ENCODE measurements at regions of chr2 and their contacts with region 1.

Region 1: DNA sequence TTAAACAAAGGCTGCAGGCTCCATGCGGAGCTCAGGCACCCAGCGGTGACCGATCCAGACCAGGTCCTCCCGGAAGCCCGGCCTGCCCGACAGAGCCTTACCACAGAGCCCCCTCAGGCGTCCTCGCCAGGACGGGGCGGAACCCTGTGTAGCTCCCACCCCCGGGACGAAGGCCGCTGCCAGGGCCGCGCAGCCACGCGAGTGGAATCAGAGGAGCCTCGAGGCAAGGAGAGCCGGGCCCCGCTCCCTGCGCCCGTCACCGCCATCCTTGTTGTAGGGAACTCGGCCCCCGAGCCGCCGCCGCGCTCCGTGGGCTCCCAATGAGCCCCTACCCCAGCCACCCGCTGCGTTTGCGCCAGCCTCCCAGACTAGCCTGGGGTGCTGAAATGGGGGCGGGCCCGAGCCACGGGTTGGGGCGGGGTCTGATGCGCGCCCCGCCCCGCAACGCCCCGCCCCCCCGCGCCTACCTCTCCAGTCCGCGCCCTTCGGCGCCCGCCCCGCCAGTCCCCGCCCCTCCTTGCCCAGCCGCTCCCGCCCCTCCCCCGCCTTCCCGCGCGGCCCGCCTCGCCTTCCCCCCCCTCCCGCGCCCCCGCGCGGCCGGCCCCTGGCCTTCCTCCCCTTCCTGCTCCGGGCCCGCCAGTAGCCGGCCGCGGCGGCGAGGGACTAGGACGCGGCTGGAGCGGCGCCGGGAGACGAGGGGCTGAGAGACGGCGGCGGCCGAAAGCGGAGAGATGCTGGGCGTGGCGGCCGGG is at the start of gene LIMS1:
- DNase-seq: peak; percentile 91
- ATAC-seq: peak; percentile 92
- H3K4me3 ChIP-seq: peak within 1 kb of the TSS; percentile 72 to 95 (median 85)
- H3K4me3 Mint-ChIP-seq: peak within 1 kb of the TSS; percentile 98
- H3K27ac ChIP-seq: peak within 1 kb of the TSS; percentile 65 to 69
- H3K27ac Mint-ChIP-seq: peak within 1 kb of the TSS; percentile 94
- H3K4me1 ChIP-seq: peaks cover 8 to 19% of the 10 kb centered on the region in 2 donors
- H3K4me1 Mint-ChIP-seq: peaks cover 30% of the 10 kb centered on the region
- H3K27me3 ChIP-seq: no peaks in the 10 kb centered on the region
- H3K27me3 Mint-ChIP-seq: no peaks in the 10 kb centered on the region
- CTCF ChIP-seq: no peak
- total RNA-seq, gene LIMS1: 22.1 and 26.2 TPM in 2 replicates

Region 2: GRCh38 chr2:108423502-108424252 is 110.3 kb before region 1 on chr2:
- CTCF ChIA-PET with region 1: no interaction called
- POLR2A ChIA-PET with region 1: no interaction called
- intact Hi-C with region 1: no loop called
- DNase-seq: no peak
- ATAC-seq: no peak
- H3K4me3 ChIP-seq: no peak overlapping the region
- H3K4me3 Mint-ChIP-seq: no peak overlapping the region
- H3K27ac ChIP-seq: no peak overlapping the region
- H3K27ac Mint-ChIP-seq: no peak overlapping the region
- H3K4me1 ChIP-seq: no peaks in the 10 kb centered on the region
- H3K4me1 Mint-ChIP-seq: no peaks in the 10 kb centered on the region
- H3K27me3 ChIP-seq: peaks cover 0 to 10% (median 0%) of the 10 kb centered on the region in 4 experiments
- H3K27me3 Mint-ChIP-seq: peaks cover 21% of the 10 kb centered on the region
- CTCF ChIP-seq: no peak

Region 3: GRCh38 chr2:108448678-108449493 is 85.1 kb before region 1 on chr2 and contains the start of gene GCC2:
- CTCF ChIA-PET with region 1: interaction called, 5 read pairs
- POLR2A ChIA-PET with region 1: interaction called, 4 read pairs
- intact Hi-C with region 1: loop called (anchors 1 kb)
- DNase-seq: peak; percentile 98
- ATAC-seq: peak; percentile 96
- H3K4me3 ChIP-seq: peak within 1 kb of the TSS; percentile 87 to 99 (median 95)
- H3K4me3 Mint-ChIP-seq: peak within 1 kb of the TSS; percentile 100
- H3K27ac ChIP-seq: peak within 1 kb of the TSS; percentile 94 to 98
- H3K27ac Mint-ChIP-seq: peak within 1 kb of the TSS; percentile 98
- H3K4me1 ChIP-seq: peaks cover 19 to 20% of the 10 kb centered on the region in 2 donors
- H3K4me1 Mint-ChIP-seq: peaks cover 43% of the 10 kb centered on the region
- H3K27me3 ChIP-seq: no peaks in the 10 kb centered on the region
- H3K27me3 Mint-ChIP-seq: no peaks in the 10 kb centered on the region
- CTCF ChIP-seq: no peak
- total RNA-seq, gene GCC2: 87.9 and 97.3 TPM in 2 replicates

Region 4: GRCh38 chr2:108553209-108553919 is 19.4 kb after region 1 on chr2:
- CTCF ChIA-PET with region 1: no interaction called
- POLR2A ChIA-PET with region 1: no interaction called
- intact Hi-C with region 1: no loop called
- DNase-seq: no peak
- ATAC-seq: no peak
- H3K4me3 ChIP-seq: no peak overlapping the region
- H3K4me3 Mint-ChIP-seq: no peak overlapping the region
- H3K27ac ChIP-seq: no peak overlapping the region
- H3K27ac Mint-ChIP-seq: no peak overlapping the region
- H3K4me1 ChIP-seq: no peaks in the 10 kb centered on the region
- H3K4me1 Mint-ChIP-seq: peaks cover 7% of the 10 kb centered on the region
- H3K27me3 ChIP-seq: no peaks in the 10 kb centered on the region
- H3K27me3 Mint-ChIP-seq: no peaks in the 10 kb centered on the region
- CTCF ChIP-seq: no peak

Region 5: DNA sequence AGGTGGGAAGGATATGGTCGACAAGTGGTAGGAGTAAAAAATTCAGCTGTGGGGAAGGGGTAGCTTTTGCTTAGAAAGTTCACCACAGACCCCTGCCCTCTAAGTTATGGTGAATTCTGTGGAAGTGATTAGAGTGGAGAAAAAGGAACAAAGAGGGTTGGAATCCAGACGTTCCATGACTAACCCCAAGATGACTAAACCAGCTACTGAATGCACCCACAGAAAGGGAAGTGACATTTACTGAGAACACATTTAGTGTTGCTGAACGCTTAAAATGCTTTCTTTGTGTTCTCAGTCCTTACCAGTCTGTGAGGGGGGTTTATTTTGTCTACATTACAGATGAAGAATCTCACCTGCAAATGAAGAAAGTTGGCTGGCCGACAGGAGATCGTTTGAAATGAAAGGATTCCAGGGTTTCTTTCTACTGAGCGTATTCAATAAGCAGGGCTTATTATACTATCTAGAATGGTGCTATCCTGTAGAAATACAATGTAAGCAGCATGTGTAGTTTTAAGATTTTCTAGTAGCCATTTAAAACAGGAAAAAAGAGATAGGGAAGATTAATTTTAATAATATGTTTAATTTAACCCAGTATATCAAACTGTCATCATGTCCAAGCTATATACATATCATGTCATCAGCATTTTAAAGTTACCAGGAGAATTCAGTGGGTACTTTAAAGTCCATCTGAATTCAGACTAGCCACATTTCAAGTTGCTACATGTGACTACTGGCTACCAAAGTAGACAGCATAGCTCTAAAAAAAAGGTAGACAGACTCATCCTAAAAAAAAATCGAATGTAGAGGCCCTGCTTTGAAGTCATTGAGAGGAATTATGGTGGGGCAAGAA is 60.3 kb after region 1 on chr2:
- CTCF ChIA-PET with region 1: no interaction called
- POLR2A ChIA-PET with region 1: no interaction called
- intact Hi-C with region 1: loop called (anchors 5 kb)
- DNase-seq: peak; percentile 62
- ATAC-seq: peak; percentile 69
- H3K4me3 ChIP-seq: no peak overlapping the region
- H3K4me3 Mint-ChIP-seq: peak overlapping the region; percentile 62
- H3K27ac ChIP-seq: peak overlapping the region in 1 of 2 donors; percentile 24
- H3K27ac Mint-ChIP-seq: peak overlapping the region; percentile 77
- H3K4me1 ChIP-seq: peaks cover 49 to 50% of the 10 kb centered on the region in 2 donors
- H3K4me1 Mint-ChIP-seq: peaks cover 69% of the 10 kb centered on the region
- H3K27me3 ChIP-seq: no peaks in the 10 kb centered on the region
- H3K27me3 Mint-ChIP-seq: no peaks in the 10 kb centered on the region
- CTCF ChIP-seq: no peak

Region 6: DNA sequence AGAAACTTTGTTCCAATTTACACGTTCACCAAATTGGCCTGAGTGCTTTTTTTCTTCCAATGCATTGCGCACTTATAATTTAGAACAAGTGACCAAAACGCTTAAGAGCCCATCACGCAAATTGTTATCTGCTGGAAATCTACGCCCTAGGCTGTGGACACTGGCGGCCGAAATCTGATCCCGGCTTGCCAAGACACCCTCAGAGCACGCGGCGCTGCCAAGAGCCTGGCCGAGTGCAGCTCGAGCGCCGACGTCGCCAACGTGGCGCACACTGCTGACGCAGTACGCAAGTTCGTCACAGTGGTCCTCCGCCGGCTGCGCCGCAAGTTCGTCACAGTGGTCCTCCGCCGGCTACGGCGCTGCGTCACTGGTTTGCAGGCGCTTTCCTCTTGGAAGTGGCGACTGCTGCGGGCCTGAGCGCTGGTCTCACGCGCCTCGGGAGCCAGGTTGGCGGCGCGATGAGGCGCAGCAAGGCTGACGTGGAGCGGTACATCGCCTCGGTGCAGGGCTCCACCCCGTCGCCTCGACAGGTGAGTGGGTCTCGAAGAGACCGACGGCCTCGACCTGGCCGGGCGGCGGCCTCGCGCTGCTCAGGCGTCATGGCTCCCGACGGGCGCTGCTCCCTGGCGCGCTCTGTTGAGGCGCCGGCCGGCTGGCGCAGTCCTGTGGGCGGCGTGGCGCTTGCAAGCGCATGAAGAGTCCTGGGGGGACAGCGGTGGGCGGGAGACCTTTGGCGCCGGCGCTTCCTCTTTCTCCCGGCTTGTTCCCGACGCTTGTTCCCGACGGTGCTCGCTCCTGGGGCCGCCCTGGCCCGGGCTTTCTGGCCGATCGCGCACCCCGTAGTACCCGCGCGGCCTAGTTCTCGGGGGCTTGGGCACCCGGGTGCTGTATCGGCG is 185.4 kb after region 1 on chr2 and contains the start of gene RANBP2:
- CTCF ChIA-PET with region 1: no interaction called
- POLR2A ChIA-PET with region 1: no interaction called
- intact Hi-C with region 1: loop called (anchors 5 kb)
- DNase-seq: peak; percentile 97
- ATAC-seq: peak; percentile 97
- H3K4me3 ChIP-seq: peak within 1 kb of the TSS; percentile 65 to 94 (median 85)
- H3K4me3 Mint-ChIP-seq: peak within 1 kb of the TSS; percentile 98
- H3K27ac ChIP-seq: peak within 1 kb of the TSS; percentile 83 to 89
- H3K27ac Mint-ChIP-seq: peak within 1 kb of the TSS; percentile 98
- H3K4me1 ChIP-seq: peaks cover 7 to 18% of the 10 kb centered on the region in 2 donors
- H3K4me1 Mint-ChIP-seq: peaks cover 22% of the 10 kb centered on the region
- H3K27me3 ChIP-seq: no peaks in the 10 kb centered on the region
- H3K27me3 Mint-ChIP-seq: no peaks in the 10 kb centered on the region
- CTCF ChIP-seq: no peak
- total RNA-seq, gene RANBP2: 67.0 and 69.5 TPM in 2 replicates

Region 7: DNA sequence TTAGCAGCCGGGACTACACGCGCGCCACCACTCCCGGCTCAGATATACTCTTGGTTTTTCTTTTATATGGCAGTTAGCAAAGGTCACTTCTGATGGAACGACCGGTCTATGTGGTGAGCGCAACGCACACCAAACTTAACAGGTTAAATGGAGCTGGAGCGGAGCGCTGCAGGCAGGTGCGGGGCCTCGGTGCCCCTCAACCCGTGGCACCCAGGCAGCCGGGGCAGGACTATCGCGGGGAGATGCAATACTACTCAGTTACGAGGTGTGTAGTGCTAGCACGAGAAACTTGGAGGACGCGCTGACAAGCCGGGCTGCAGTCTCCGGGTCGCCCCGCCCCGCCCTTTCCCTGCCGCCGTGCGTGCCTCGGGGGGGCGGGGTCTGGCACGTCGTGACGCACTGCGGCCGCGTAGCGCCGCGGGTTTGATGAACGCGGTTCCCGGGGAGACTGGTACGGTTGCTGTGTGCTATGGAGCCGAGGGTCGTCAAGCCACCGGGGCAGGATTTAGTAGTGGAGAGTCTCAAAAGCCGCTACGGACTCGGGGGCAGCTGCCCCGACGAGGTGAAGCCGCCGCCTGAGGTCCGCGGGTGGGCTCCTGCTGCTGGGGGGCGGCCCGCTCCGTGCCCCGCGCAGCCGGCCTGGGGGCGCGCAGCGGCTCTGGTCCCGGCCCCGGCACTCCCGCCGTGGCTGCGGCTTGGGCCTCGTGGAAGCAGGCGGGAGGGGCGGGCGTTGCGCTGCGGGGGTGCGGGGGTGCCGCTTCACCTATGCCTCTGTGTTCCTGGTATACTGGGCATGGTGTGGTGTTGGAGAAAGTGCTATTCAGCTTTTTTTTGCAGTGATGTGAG is 252.6 kb after region 1 on chr2 and contains the start of gene CCDC138:
- CTCF ChIA-PET with region 1: no interaction called
- POLR2A ChIA-PET with region 1: no interaction called
- intact Hi-C with region 1: loop called (anchors 1 kb)
- DNase-seq: peak; percentile 92
- ATAC-seq: peak; percentile 97
- H3K4me3 ChIP-seq: peak within 1 kb of the TSS; percentile 61 to 88 (median 70)
- H3K4me3 Mint-ChIP-seq: peak within 1 kb of the TSS; percentile 99
- H3K27ac ChIP-seq: peak within 1 kb of the TSS; percentile 69 to 86
- H3K27ac Mint-ChIP-seq: peak within 1 kb of the TSS; percentile 91
- H3K4me1 ChIP-seq: peaks cover 6 to 7% of the 10 kb centered on the region in 2 donors
- H3K4me1 Mint-ChIP-seq: peaks cover 12% of the 10 kb centered on the region
- H3K27me3 ChIP-seq: no peaks in the 10 kb centered on the region
- H3K27me3 Mint-ChIP-seq: no peaks in the 10 kb centered on the region
- CTCF ChIP-seq: no peak
- total RNA-seq, gene CCDC138: 11.4 and 16.3 TPM in 2 replicates

Region 8: DNA sequence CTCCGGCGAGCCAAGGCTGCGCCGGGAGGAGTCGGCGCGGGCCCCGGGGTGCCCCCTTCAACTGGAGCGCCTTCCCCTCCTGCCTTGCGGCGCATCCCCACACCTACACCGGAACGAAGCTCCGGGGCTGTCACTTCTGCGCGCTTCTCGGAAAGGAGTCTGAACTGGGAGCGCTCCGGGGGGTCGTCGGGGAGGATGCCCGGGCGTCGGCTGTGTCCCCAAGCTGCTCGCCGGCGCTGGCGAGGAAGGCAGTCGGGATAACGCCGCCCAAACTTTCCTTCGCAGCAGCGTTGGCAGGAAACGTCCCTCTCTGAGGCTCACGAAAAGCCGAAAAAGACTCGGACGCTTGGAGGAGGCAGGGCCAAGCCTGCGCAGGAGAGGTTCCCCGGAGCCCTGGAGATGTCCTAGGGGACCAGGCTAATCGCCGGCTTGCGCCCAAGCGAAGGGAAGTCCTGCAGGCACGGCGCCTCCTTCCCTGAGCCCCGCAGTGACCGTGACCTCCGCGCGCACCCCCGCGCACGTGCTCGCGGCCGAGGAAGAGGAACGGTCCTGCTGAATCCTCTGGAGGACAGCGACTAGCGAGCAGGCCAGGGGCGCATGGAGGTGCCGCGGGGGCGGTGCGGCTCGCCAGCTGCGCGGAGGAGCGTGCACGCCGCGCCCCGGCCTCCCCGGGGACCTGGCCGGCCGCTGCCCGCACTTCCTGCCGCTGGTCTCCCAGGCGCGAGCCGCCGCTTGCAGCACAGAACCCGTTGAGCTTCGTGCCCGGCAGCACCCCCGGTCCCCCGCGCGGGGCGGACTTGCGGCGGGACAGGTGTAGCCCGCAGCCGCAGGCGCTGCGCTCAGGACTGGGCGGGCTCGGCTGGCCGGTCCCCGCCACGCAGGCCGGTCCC is 594.7 kb after region 1 on chr2 and contains the start of gene SH3RF3:
- CTCF ChIA-PET with region 1: no interaction called
- POLR2A ChIA-PET with region 1: no interaction called
- intact Hi-C with region 1: no loop called
- DNase-seq: peak; percentile 52
- ATAC-seq: peak; percentile 48
- H3K4me3 ChIP-seq: peak within 1 kb of the TSS; percentile 46 to 77 (median 62)
- H3K4me3 Mint-ChIP-seq: peak within 1 kb of the TSS; percentile 85
- H3K27ac ChIP-seq: no peak within 1 kb of the TSS
- H3K27ac Mint-ChIP-seq: peak within 1 kb of the TSS; percentile 41
- H3K4me1 ChIP-seq: peaks cover 5 to 10% of the 10 kb centered on the region in 2 donors
- H3K4me1 Mint-ChIP-seq: peaks cover 10% of the 10 kb centered on the region
- H3K27me3 ChIP-seq: peaks cover 0 to 10% (median 2%) of the 10 kb centered on the region in 4 experiments
- H3K27me3 Mint-ChIP-seq: peaks cover 32% of the 10 kb centered on the region
- CTCF ChIP-seq: no peak
- total RNA-seq, gene SH3RF3: 0.07 and 0.12 TPM in 2 replicates